A549 (cell line): ENCODE measurements at regions of chr12 and their contacts with region 1.

Region 1: GRCh38 chr12:6323340-6323994 is 13.0 kb downstream of the PLEKHG6 start:
- DNase-seq: peak; percentile 88 to 92
- ATAC-seq: peak; percentile 56 to 67
- H3K4me3 ChIP-seq: peak overlapping the region; percentile 11; the same call in 1 of the 3 replicates
- H3K27ac ChIP-seq: peak overlapping the region; percentile 81 to 95
- H3K4me1 ChIP-seq: peaks cover 93% of the 10 kb centered on the region
- CTCF ChIP-seq: peak; percentile 72
- EP300 ChIP-seq: no peak
- POLR2A ChIP-seq: no peak
- RAD21 ChIP-seq: peak; percentile 61 to 75; a peak in 4 of 5 replicates

Region 2: DNA sequence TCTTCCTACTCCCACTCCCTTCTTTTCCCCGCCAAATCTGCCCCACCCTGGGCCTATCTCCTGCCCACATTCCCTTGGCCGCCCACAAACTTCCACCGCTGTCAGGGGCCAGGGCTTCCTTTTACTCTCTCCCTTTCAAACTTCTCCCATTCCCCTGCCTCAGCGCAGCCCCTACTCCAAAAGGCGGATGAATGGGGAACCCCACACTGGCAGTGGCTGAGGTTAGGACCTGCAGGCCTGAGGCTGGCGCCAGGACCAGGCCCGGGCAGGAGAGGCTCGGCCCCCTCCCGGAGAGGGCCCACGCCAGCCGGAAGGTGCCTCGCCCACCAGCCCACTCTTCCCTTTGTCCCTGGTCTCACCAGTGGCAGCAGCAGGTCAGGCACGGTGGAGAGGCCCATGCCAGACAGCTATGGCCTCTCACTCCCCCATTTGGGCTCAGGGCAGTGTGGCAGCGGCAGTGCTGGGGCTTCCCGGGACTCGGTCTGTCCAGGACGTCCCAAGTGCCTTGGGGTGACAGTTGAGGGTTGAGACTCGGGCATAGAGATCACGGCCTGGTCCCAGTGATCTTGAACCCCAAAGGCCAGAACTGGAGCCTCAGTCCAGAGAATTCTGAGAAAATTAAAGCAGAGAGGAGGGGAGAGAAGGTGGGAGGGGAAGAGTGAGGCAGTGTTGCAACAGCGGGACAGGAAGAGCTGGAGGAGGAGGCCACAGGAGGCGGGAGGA is 18.1 kb after region 1 on chr12 and contains the start of gene TNFRSF1A:
- CTCF ChIA-PET with region 1: interaction called, 51 read pairs
- POLR2A ChIA-PET with region 1: interaction called, 35 read pairs
- DNase-seq: peak; percentile 84 to 91
- ATAC-seq: peak; percentile 60 to 62
- H3K4me3 ChIP-seq: peak within 1 kb of the TSS; percentile 91
- H3K27ac ChIP-seq: peak within 1 kb of the TSS; percentile 95 to 98
- H3K4me1 ChIP-seq: peaks cover 72% of the 10 kb centered on the region
- CTCF ChIP-seq: no peak
- EP300 ChIP-seq: peak in 1 of 2 experiments; percentile 42; a peak in 1 of 5 replicates
- POLR2A ChIP-seq: peak; percentile 58
- RAD21 ChIP-seq: peak in 1 of 2 experiments; percentile 27; a peak in 1 of 5 replicates
- polyA plus RNA-seq, gene TNFRSF1A: 460 and 621 TPM in 2 replicates

Region 3: DNA sequence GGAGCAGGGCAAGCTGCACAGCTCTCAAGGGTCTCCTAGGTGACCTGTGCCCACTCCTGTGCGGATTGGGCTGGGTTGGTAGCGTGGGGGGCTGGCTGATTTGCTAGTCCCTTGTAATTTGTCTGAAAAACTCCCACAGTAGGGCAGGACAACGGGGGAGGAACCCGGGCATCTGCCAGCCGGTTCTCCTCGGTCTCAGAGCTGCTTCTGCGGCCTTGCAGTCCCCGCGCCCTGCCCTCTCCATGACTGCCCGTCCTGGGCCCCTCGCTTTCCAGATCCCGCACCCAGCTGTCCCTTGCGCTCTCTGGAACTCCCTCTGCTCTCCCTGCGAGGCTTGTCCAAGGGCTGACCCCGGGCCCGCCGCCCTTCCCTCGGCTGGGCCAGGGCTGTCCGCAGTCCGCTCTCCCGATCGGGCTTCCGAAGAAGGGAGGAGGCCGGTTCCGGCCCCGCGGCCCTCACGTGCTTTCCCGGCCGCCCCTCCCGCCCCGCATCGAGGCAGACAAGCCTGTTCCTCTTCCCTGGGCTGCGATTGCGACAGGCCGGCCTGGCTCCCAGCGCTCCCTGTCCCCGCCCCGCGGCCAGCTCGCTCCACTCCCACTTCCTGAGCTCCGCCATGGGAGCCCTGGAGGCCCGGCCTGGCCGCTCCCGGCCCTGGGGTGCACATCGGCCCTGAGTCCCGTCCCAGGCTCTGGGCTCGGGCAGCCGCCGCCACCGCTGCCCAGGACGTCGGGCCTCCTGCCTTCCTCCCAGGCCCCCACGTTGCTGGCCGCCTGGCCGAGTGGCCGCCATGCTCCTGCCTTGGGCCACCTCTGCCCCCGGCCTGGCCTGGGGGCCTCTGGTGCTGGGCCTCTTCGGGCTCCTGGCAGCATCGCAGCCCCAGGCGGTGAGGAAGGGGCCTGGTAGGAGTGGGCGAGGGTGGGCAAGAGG is 60.4 kb after region 1 on chr12 and contains the start of gene LTBR:
- CTCF ChIA-PET with region 1: interaction called, 705 read pairs
- POLR2A ChIA-PET with region 1: interaction called, 7 read pairs
- DNase-seq: peak; percentile 83 to 91
- ATAC-seq: peak; percentile 94 to 96
- H3K4me3 ChIP-seq: peak within 1 kb of the TSS; percentile 83
- H3K27ac ChIP-seq: peak within 1 kb of the TSS; percentile 99 to 100
- H3K4me1 ChIP-seq: peaks cover 42% of the 10 kb centered on the region
- CTCF ChIP-seq: no peak
- EP300 ChIP-seq: no peak
- POLR2A ChIP-seq: peak; percentile 66
- RAD21 ChIP-seq: peak in 1 of 2 experiments; percentile 55; a peak in 4 of 5 replicates
- polyA plus RNA-seq, gene LTBR: 57.3 and 63.9 TPM in 2 replicates

Region 4: DNA sequence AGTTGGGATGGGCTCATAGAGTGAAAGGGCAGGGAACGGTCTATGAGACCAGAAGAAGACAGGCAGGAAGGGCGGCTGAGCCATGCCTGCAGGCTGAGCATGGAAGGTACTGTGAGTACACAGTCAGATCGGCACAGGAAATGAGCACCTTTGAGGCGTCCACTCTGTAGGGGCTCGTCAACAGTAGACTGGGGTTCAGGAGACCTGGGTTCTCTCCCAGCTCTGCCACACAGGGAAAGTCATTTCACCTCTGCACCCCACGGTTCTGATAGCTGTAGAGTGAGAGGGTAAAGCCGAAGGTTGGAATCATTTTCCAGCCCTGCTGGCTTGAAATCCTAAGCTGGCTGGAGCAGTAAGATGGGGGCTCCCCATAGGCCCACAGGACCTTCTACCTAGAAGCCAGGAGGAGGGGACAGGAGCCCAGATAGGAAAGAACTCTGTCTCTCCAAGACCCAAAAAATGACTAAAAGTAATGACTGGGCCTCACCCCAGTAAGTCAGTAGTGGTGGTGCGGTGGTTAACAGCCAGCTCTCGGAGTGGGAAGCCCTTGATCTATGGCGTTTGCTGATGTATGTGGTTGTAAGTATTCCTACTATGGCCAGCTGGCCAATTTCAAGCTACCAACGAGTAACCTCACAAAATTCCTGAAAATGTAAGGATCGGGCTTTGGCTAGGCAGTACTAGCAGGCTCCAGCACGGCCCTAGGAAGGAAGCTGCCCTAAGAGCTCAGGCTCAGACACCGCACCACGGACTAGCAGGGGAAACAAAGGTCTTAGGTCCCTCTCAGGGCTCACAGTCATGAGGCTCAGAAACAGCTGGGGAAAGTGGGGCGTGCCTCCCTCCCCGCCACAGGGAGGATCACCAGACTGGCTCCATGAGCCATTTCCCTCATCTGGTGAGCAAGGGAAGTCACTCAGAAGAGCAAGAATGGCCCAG is 111.0 kb after region 1 on chr12:
- CTCF ChIA-PET with region 1: interaction called, 11 read pairs
- POLR2A ChIA-PET with region 1: no interaction called
- DNase-seq: no peak
- ATAC-seq: no peak
- H3K4me3 ChIP-seq: no peak overlapping the region
- H3K27ac ChIP-seq: peak overlapping the region; percentile 2 to 52; a peak in 3 of 6 replicates
- H3K4me1 ChIP-seq: peaks cover 24% of the 10 kb centered on the region
- CTCF ChIP-seq: no peak
- EP300 ChIP-seq: no peak
- POLR2A ChIP-seq: no peak
- RAD21 ChIP-seq: no peak

Region 5: DNA sequence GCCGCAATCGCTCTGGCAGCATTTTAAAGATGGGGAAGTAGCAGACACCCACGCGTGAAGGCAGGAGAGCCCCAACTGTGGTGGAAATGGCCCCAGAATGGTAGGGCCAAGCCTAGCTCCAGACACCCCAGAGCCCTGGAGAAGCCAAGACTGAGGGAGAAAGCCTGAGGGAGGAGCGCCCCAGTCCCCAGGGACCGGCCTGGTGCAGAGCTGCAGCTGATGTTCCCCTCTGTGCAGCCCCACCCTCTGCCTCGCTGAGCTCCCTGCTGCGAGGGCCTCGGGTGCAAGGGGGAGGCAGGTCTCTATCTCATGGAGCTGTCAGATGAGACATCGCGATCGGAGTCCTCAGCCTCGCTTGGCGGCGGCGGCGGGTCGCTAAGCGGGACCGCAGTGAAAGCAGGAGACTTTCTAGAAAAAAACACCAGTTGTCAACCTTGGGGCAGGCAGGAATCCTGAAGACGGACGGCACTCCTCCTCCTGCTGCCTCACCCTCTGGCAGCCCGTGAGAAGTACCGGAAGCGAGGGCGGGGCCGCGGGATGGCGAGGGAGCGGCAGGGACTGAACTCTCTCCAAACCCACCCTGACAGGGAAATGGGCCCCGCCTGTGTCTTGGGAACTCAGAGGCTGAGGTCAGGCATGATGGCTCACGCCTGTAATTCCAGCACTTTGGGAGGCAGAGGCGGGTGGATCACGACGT is 216.9 kb after region 1 on chr12:
- CTCF ChIA-PET with region 1: interaction called, 16 read pairs
- POLR2A ChIA-PET with region 1: interaction called, 4 read pairs
- DNase-seq: peak; percentile 87 to 91
- ATAC-seq: peak; percentile 58 to 69
- H3K4me3 ChIP-seq: peak overlapping the region; percentile 34
- H3K27ac ChIP-seq: peak overlapping the region; percentile 70 to 81
- H3K4me1 ChIP-seq: peaks cover 57% of the 10 kb centered on the region
- CTCF ChIP-seq: no peak
- EP300 ChIP-seq: no peak
- POLR2A ChIP-seq: no peak
- RAD21 ChIP-seq: no peak